Dendritic cell treated with granulocyte-macrophage colony-stimulating factor and Interleukin-4, amounts not matched to agents 40 ng/mL and 50 ng/mL, for 4 days (primary cell): ENCODE measurements at regions of chr6 and their contacts with region 1.

Region 1: DNA sequence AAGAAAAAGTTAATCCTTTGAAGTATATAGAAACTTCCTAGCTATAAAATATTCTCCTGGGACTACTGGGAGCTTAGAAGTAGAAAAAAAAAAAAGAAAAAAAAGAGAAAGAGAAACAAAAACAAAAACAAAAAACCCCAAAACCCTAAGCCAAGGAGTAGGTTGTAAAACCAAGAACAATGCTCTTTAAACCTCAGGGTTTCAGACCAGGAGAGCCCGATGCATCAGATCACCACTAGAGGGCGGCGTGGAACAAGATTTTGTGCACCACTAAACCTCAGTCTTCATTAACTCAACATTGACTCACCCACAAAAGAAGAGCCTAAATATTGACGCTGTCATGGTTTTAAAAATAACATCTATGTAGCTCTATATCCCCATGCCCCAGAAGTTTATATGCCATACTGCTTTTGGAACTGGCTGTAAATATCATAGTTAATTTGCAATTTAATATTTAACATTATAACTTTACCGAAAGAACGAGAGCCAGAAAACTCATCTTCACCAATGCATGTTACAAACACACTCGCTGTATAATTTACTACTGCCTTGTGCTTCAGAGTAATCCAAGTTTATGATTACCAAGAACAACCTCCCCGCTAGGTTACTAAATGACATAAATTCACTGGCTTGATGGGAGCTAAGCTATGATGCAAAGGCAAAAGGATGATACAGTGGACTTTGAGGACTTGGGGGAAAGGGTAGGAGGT is 19.2 kb downstream of the MCUR1 start:
- H3K4me3 Mint-ChIP-seq: no peak overlapping the region
- H3K27ac Mint-ChIP-seq: no peak overlapping the region
- H3K4me1 Mint-ChIP-seq: peaks cover 6% of the 10 kb centered on the region
- H3K27me3 Mint-ChIP-seq: no peaks in the 10 kb centered on the region

Region 2: DNA sequence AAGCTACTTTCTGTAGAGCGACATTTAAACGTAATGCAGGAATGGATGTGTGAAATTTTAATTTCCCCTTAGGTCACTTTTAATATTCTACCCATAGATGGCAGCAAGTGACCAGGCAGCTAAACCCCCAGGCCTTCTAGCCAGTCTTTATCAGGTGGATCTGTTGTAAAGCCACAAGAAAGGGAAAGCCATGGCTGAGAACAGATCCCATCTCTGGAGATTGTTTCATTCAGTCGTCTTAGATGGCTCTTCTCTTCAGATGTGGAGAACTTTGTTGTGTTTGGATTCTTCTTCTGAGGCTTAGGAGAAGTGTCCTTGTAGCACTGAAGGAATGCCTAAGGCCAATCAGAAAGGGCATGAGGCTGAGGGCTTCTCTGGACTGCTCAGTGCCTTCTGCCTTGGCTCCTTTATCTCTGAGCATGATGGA is 113.8 kb after region 1 on chr6:
- intact Hi-C with region 1: loop called (anchors 5 kb)
- H3K4me3 Mint-ChIP-seq: no peak overlapping the region
- H3K27ac Mint-ChIP-seq: no peak overlapping the region
- H3K4me1 Mint-ChIP-seq: no peaks in the 10 kb centered on the region
- H3K27me3 Mint-ChIP-seq: peaks cover 21% of the 10 kb centered on the region

Region 3: GRCh38 chr6:14046476-14047068 is 251.4 kb after region 1 on chr6:
- intact Hi-C with region 1: loop called (anchors 2 kb)
- H3K4me3 Mint-ChIP-seq: no peak overlapping the region
- H3K27ac Mint-ChIP-seq: no peak overlapping the region
- H3K4me1 Mint-ChIP-seq: no peaks in the 10 kb centered on the region
- H3K27me3 Mint-ChIP-seq: peaks cover 33% of the 10 kb centered on the region

Region 4: GRCh38 chr6:14066782-14067406 is 271.7 kb after region 1 on chr6:
- intact Hi-C with region 1: loop called (anchors 2 kb)
- H3K4me3 Mint-ChIP-seq: no peak overlapping the region
- H3K27ac Mint-ChIP-seq: peak overlapping the region; percentile 27
- H3K4me1 Mint-ChIP-seq: peaks cover 24% of the 10 kb centered on the region
- H3K27me3 Mint-ChIP-seq: peaks cover 32% of the 10 kb centered on the region

Region 5: GRCh38 chr6:14144678-14145113 is 349.5 kb after region 1 on chr6:
- intact Hi-C with region 1: loop called (anchors 10 kb)
- H3K4me3 Mint-ChIP-seq: no peak overlapping the region
- H3K27ac Mint-ChIP-seq: peak overlapping the region; percentile 42
- H3K4me1 Mint-ChIP-seq: peaks cover 23% of the 10 kb centered on the region
- H3K27me3 Mint-ChIP-seq: peaks cover 8% of the 10 kb centered on the region